ENCODE measurements at regions of chr11 and their contacts with region 1.

Region 1: GRCh38 chr11:115226556-115226955 is 277.7 kb downstream of the CADM1 start:
- DNase-seq: peak; percentile 80
- H3K4me3 ChIP-seq: no peak overlapping the region
- H3K4me3 Mint-ChIP-seq: peak overlapping the region; percentile 40
- H3K27ac Mint-ChIP-seq: peak overlapping the region; percentile 54
- H3K4me1 ChIP-seq: peaks cover 33% of the 10 kb centered on the region
- H3K4me1 Mint-ChIP-seq: peaks cover 27% of the 10 kb centered on the region
- H3K27me3 ChIP-seq: no peaks in the 10 kb centered on the region
- H3K27me3 Mint-ChIP-seq: no peaks in the 10 kb centered on the region
- CTCF ChIP-seq: peak in 1 of 2 experiments; percentile 2

Region 2: DNA sequence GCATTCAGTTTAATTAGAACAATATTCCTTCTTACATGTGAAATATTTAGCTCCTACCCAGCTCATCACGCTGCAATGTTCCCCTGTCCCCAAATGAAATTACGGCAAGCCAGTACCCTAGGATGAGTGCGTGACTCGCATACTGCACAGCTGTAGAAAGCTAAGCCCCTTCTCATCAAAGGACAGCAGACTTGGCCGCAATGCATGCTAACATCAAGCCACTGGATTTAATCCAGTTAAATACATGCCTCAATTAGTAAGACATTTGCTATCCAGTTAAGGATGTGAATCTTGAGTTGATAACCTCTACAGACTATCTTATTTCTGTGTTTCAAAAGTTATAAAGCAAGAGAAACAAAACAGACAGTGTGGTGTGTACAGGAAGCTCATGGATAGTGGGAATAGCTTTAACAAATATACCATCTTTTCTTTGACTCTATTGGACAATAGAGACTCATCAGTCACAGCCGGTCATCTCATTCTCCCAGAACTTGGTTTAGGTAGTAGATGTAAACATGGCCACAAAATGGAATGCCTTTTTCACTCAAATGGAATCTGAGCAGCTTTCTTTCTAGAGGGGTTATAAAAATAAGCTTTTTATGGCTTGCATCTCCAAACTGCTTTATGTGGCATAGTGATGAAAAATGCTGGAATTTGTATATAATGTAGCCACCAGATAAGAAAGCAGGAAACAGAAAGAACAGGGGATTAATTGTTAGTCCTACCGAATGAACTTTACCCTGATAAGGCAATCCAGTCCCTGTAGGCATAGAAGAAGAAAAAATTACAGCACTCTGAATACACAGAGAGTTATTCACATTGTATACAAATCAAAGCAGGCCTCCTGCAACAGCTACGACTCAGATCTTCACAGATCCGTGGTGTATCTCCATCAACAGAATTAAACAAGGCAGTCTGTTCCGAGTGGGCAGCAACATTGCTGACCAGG is 53.5 kb after region 1 on chr11:
- CTCF ChIA-PET with region 1: interaction called, 3 read pairs
- POLR2A ChIA-PET with region 1: interaction called, 5 read pairs
- intact Hi-C with region 1: loop called (anchors 1 kb)
- DNase-seq: peak; percentile 46 to 76
- H3K4me3 ChIP-seq: peak overlapping the region; percentile 19
- H3K4me3 Mint-ChIP-seq: peak overlapping the region; percentile 74
- H3K27ac Mint-ChIP-seq: peak overlapping the region; percentile 88
- H3K4me1 ChIP-seq: peaks cover 43% of the 10 kb centered on the region
- H3K4me1 Mint-ChIP-seq: peaks cover 42% of the 10 kb centered on the region
- H3K27me3 ChIP-seq: no peaks in the 10 kb centered on the region
- H3K27me3 Mint-ChIP-seq: no peaks in the 10 kb centered on the region
- CTCF ChIP-seq: no peak